H1 (cell line): ENCODE measurements at regions of chrX and their contacts with region 1.

Region 1: DNA sequence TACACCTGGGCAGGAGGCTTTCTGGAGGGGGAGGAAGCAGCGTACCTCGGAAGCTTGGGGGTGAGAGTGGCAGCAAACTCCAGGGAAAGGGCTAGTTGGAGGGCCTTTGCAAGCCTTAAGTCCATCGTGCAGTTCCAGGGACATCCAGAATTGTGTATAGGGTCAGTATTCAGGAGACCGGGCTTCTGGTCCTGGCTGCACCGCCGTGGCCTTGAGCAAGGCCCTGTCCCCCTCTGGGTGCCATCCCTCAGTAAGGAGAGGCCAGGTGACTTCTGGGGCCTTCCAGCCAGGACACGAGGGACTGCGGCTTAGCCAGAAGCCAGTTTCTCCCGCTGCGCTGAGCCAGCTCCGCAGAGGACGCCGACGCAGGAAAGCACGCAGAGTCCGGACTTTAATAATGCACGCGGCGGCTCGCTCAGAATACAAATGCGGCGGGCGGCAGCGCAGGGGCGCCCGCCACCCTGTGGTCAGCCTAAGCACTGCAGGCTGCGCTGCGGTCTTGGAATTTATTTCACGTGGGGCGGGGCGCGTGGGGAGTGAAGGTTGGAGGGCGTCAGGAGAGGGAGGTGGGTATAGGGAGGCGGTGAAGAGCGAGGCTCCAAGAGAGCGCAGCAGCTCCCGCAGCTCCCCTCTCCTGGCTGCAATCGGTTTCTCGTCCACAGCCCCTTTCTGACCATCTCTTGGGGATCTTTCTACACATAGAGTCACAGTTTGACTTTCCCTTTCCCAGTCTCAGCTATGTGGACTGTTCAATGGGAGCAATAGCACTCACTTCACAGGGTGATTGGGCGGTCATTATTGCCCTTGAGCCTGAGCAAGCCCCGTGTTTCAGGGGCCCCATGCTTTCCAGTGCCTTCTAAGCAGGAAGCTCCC is 94.1 kb upstream of the GPR50 start:
- DNase-seq: peak; percentile 15 to 81
- H3K4me3 ChIP-seq: peak overlapping the region in 3 of 4 experiments; percentile 10 to 52 (median 14); a peak in 6 of 8 replicates
- H3K27ac ChIP-seq: no peak overlapping the region
- H3K4me1 ChIP-seq: peaks cover 0 to 5% (median 0%) of the 10 kb centered on the region in 4 experiments; a peak in 1 of 7 replicates
- H3K27me3 ChIP-seq: peaks cover 0 to 9% (median 3%) of the 10 kb centered on the region in 4 experiments; a peak in 3 of 7 replicates
- CTCF ChIP-seq: peak; percentile 68 to 73 (median 69)
- EP300 ChIP-seq: no peak
- POLR2A ChIP-seq: no peak
- RAD21 ChIP-seq: peak; percentile 72 to 85

Region 2: GRCh38 chrX:150766351-150767044 is 315.8 kb before region 1 on chrX:
- CTCF ChIA-PET with region 1: interaction called, 40 read pairs
- POLR2A ChIA-PET with region 1: no interaction called
- DNase-seq: no peak
- H3K4me3 ChIP-seq: no peak overlapping the region
- H3K27ac ChIP-seq: no peak overlapping the region
- H3K4me1 ChIP-seq: peaks cover 0 to 10% (median 3%) of the 10 kb centered on the region in 4 experiments; a peak in 4 of 7 replicates
- H3K27me3 ChIP-seq: no peaks in the 10 kb centered on the region
- CTCF ChIP-seq: peak in 2 of 3 experiments; percentile 12 to 43; a peak in 1 of 4 replicates
- EP300 ChIP-seq: no peak
- POLR2A ChIP-seq: no peak
- RAD21 ChIP-seq: peak; percentile 32 to 41

Region 3: DNA sequence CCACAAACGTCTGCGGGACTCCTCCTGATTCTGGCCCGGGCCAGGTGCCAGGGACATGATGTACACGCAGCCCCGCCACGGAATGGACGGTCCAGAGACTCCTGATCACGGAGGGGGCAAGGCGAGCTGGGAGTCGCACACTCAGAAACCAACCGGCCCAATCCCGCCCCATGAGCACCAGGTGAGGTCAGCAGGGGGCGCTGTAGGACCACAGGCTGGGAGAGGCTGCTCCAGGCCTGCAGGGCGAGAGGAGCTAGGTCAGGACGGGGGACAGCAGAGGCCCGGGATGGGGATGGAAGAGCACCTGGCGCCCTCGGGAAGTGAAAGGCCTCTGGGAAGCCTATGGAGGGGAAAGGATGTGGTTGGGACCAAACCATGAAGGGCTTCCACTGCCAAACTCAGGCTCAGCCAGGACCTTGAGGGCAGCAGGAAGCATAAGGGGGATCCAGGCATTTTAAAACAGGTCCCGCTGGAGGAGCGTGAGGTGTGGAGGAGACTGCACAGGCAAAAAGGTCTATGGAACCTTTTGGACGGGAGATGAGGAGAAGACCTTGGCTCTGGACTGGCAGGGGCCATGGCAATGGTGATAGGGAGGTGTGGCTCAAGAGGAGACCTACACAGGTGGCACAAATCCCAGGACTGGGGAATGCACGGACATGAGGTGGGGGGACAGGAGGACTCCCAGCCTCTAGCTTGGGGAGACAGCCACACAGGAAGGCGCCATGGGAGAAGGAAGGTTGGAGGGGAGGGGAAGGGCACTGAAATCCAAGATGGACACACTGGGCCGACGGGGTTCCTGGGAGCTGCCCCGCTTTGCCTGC is 310.0 kb before region 1 on chrX:
- CTCF ChIA-PET with region 1: interaction called, 40 read pairs
- POLR2A ChIA-PET with region 1: no interaction called
- DNase-seq: peak; percentile 21 to 92
- H3K4me3 ChIP-seq: no peak overlapping the region
- H3K27ac ChIP-seq: no peak overlapping the region
- H3K4me1 ChIP-seq: no peaks in the 10 kb centered on the region; a peak in 2 of 7 replicates
- H3K27me3 ChIP-seq: no peaks in the 10 kb centered on the region
- CTCF ChIP-seq: peak in 2 of 3 experiments; percentile 86 to 90; a peak in 3 of 4 replicates
- EP300 ChIP-seq: no peak
- POLR2A ChIP-seq: no peak
- RAD21 ChIP-seq: peak; percentile 96 to 98

Region 4: DNA sequence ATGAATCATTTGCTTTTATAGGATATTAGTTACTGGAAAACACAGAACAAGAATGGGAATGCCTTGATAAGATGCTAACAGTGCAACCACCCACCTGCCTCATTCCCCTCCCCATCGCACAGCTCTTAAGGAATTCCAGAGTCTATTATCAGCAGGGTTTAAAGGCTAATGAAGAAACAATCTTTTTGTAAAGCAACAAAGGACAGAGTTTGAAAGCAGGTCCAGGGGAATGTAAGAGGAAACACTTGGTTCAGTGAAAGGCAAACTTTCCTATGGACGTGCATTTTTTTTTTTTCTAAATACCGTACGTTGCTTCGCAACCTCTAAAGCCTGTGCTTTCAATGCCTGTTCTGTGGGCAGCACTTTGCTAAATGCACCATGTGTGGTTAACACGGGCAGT is 186.5 kb after region 1 on chrX:
- CTCF ChIA-PET with region 1: no interaction called
- POLR2A ChIA-PET with region 1: no interaction called
- DNase-seq: no peak
- H3K4me3 ChIP-seq: no peak overlapping the region
- H3K27ac ChIP-seq: no peak overlapping the region
- H3K4me1 ChIP-seq: no peaks in the 10 kb centered on the region
- H3K27me3 ChIP-seq: no peaks in the 10 kb centered on the region
- CTCF ChIP-seq: no peak
- EP300 ChIP-seq: no peak
- POLR2A ChIP-seq: no peak
- RAD21 ChIP-seq: no peak